ENCODE measurements at regions of chr10 and their contacts with region 1.

Region 1: DNA sequence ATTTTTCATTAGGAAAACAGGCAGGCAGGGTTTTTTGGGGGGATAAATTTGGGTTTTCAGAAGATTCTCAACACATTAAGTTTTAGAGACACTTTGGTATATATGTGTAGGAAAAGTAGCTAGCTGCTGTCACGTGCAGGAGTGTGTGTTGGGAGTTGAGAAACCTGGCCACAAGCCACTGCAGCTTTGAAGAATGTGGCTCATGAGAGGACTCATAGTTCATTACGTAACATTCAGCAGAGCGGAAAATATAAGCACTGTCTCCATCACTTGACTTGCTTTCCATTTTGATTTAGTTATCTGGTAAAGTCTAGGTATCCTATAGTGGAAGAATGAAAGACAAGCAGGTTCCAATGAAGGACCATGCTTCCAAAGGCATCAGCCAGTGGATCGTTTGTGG is 31.2 kb downstream of the SMNDC1 start:
- DNase-seq: peak; percentile 4 to 59
- H3K4me3 ChIP-seq: no peak overlapping the region
- H3K27ac ChIP-seq: no peak overlapping the region
- H3K4me1 ChIP-seq: peaks cover 4% of the 10 kb centered on the region; the same call in 1 of the 2 replicates
- H3K27me3 ChIP-seq: no peaks in the 10 kb centered on the region
- CTCF ChIP-seq: no peak

Region 2: GRCh38 chr10:109474812-109475211 is 798.7 kb before region 1 on chr10:
- CTCF ChIA-PET with region 1: no interaction called
- POLR2A ChIA-PET with region 1: no interaction called
- intact Hi-C with region 1: no loop called
- DNase-seq: no peak
- H3K4me3 ChIP-seq: no peak overlapping the region
- H3K27ac ChIP-seq: no peak overlapping the region
- H3K4me1 ChIP-seq: no peaks in the 10 kb centered on the region
- H3K27me3 ChIP-seq: no peaks in the 10 kb centered on the region; the same call in 1 of the 2 replicates
- CTCF ChIP-seq: no peak

Region 3: DNA sequence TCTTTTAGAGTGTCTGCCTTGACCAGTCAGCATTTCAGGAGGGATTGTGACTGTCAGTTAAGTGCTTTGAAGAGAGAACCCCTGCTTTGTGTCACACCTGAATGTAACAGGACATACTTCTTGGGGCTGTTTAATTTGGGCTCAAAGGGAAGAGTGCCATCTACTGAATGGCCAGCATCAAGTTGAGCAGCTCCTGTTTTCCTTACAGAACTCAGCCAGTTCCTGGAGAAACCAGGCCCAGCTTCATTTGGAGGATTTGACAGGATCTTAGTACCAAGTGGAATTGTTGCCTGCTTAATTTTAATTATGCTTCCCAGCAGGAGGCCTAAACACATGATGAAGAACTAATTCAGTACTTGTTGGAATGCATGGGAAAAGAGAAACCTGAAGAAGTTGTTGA is 257.4 kb before region 1 on chr10:
- CTCF ChIA-PET with region 1: no interaction called
- POLR2A ChIA-PET with region 1: no interaction called
- intact Hi-C with region 1: no loop called
- DNase-seq: no peak
- H3K4me3 ChIP-seq: no peak overlapping the region
- H3K27ac ChIP-seq: no peak overlapping the region
- H3K4me1 ChIP-seq: peaks cover 29% of the 10 kb centered on the region
- H3K27me3 ChIP-seq: no peaks in the 10 kb centered on the region
- CTCF ChIP-seq: 0 out of 2 replicates have a peak, but pooled peaks have one; percentile 20

Region 4: DNA sequence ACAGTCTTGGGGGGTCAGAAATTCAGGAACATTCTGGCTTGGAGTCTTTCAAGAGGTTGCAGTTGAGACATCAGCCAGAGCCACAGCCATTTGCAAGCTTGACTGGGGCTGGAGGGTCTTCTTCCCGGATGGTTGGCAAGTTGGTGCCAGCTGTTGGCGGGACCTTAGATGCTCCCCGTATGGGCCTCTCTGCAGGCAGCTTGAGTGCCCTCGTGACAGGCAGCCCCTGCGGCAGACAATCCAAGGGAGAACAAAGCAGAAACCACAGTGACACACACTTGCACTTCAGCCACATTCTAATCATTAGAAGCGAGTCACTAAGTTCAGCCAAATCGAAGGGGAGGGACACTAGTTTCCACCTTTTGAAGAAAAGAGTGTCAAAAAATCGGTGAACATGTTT is 125.5 kb before region 1 on chr10:
- CTCF ChIA-PET with region 1: no interaction called
- POLR2A ChIA-PET with region 1: no interaction called
- intact Hi-C with region 1: loop called (anchors 2 kb)
- DNase-seq: no peak
- H3K4me3 ChIP-seq: no peak overlapping the region
- H3K27ac ChIP-seq: no peak overlapping the region
- H3K4me1 ChIP-seq: no peaks in the 10 kb centered on the region
- H3K27me3 ChIP-seq: no peaks in the 10 kb centered on the region
- CTCF ChIP-seq: no peak

Measured in PC-9 (cell line).